Psoas muscle (tissue), 8 donors: ENCODE measurements at regions of chr9 and their contacts with region 1.

Region 1: DNA sequence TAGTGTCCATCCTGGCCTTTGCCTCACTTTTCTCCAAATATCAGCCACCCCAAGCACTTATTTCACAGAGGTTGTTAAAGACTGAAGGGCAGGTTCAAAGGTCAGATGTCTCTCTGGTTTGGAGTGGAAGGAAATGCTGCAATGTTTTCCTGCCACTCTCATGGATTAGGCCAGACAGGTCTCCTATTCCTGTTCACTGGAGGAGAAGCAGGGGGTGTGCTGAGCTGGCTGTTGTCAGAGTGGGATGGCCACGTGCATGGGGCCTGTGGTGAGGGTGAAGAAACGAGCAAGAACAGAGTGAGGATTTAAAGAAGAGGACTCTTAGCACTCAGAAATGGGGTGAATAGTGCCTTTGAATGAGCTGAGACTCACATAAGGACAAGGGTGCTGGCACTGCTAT is 6.7 kb downstream of the TMEM8B start:
- DNase-seq: no peak
- ATAC-seq: no peak
- H3K4me3 ChIP-seq: no peak overlapping the region
- H3K27ac ChIP-seq: peak overlapping the region; percentile 58
- H3K4me1 ChIP-seq: peaks cover 45% of the 10 kb centered on the region
- H3K27me3 ChIP-seq: no peaks in the 10 kb centered on the region
- CTCF ChIP-seq: no peak

Region 2: DNA sequence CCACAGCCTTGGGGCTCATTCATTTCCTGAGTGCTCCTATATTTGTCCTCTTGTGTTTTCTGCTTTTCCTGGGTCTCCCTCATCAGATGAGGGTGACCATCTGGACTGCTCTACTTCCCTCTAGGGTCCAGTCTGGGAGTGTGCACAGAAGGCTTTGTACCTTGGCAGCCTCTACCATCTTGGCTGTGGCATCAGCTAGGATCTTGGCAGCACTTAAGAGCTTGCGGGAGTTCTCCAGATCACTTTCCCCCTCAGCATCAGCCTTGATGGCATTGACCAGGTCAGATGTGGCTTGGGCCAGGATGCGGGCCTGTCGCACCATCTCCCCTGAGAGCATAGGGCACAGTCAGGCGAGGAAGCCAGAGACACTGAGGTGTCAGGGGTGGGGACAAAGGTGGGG is 119.5 kb before region 1 on chr9:
- intact Hi-C with region 1: no loop called
- DNase-seq: no peak
- ATAC-seq: peak in 3 of 4 donors; percentile 50 to 82 (median 63)
- H3K4me3 ChIP-seq: no peak overlapping the region
- H3K27ac ChIP-seq: no peak overlapping the region
- H3K4me1 ChIP-seq: no peaks in the 10 kb centered on the region
- H3K27me3 ChIP-seq: no peaks in the 10 kb centered on the region
- CTCF ChIP-seq: no peak

Region 3: GRCh38 chr9:35852876-35853865 is 17.4 kb after region 1 on chr9:
- intact Hi-C with region 1: loop called in 1 of 2 experiments (anchors 1 kb)
- DNase-seq: no peak
- ATAC-seq: no peak
- H3K4me3 ChIP-seq: no peak overlapping the region
- H3K27ac ChIP-seq: no peak overlapping the region
- H3K4me1 ChIP-seq: peaks cover 7% of the 10 kb centered on the region
- H3K27me3 ChIP-seq: no peaks in the 10 kb centered on the region
- CTCF ChIP-seq: no peak

Region 4: DNA sequence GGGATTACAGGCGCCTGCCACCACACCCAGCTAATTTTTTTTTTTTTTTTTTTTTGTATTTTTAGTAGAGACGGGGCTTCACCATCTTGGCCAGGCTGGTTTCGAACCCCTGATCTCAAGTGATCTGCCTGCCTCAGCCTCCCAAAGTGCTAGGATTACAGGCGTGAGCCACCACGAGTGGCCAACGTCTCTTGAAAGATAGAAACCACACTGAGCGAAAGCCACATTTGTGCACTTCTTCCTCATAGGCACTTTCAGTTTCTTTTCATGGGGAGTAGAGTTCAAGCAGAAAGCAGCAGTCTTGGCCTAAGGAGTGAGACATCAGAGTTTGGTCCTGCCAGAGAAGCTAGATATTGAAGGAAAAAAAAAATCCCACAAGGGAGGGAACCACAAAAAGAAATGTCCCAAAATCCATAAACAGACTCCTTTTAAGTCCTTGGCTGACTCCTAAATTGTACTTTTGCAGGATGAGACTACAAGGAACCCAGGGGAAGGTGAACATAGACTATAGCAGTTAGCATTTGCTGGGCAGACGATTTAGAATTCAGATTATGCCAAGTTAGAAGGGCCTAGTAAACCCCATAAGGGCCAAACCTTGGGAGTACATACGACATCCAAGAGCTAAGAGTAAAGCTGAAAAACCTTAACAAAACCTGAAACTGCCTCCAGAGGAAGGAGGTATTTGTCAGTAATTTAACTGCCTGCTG is 256.9 kb after region 1 on chr9:
- intact Hi-C with region 1: no loop called
- DNase-seq: no peak
- ATAC-seq: no peak
- H3K4me3 ChIP-seq: no peak overlapping the region
- H3K27ac ChIP-seq: peak overlapping the region; percentile 14
- H3K4me1 ChIP-seq: peaks cover 6% of the 10 kb centered on the region
- H3K27me3 ChIP-seq: no peaks in the 10 kb centered on the region
- CTCF ChIP-seq: no peak